B cell (primary cell): ENCODE measurements at regions of chr17 and their contacts with region 1.

Region 1: GRCh38 chr17:42388381-42389134 is at the start of gene STAT3:
- DNase-seq: peak; percentile 100
- ATAC-seq: peak; percentile 89
- H3K4me3 ChIP-seq: peak within 1 kb of the TSS; percentile 67 to 97 (median 91)
- H3K4me3 Mint-ChIP-seq: peak within 1 kb of the TSS; percentile 98
- H3K27ac ChIP-seq: peak within 1 kb of the TSS; percentile 97
- H3K27ac Mint-ChIP-seq: peak within 1 kb of the TSS; percentile 99
- H3K4me1 ChIP-seq: peaks cover 19 to 34% of the 10 kb centered on the region in 2 donors
- H3K4me1 Mint-ChIP-seq: peaks cover 51% of the 10 kb centered on the region
- H3K27me3 ChIP-seq: no peaks in the 10 kb centered on the region
- H3K27me3 Mint-ChIP-seq: no peaks in the 10 kb centered on the region
- CTCF ChIP-seq: no peak
- total RNA-seq, gene STAT3: 140 and 151 TPM in 2 replicates

Region 2: DNA sequence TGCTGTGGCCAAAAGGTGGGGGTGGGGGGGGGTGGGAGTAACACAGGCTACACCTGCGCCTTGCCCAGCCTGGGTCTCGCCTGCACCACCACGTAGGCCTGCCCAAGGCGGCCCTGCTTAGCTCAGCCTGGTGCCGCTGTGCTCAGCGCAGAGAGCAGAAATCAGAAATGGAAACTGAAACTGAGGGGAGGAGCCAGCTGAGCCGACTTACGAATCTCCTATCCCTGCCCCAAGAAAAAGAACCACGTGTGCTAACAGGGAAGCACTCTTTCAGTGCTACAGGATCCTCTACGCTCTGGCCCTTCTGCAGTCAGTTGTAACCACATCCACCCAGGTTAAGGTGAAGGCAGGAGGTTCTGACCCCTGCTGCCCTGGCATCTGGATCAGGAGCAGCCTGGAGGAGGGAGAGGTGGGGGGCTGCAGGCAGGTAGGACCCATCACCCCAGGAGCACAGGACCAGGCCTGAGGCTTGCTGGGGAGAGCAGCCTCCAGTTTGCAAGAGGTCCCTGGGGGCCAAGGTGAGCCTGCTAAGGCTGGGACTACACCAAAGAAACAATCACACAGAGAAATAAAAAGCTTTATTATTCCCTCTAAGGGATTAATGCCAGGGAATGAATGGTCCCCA is 275.9 kb before region 1 on chr17 and contains the start of gene DHX58:
- CTCF ChIA-PET with region 1: no interaction called
- POLR2A ChIA-PET with region 1: no interaction called
- intact Hi-C with region 1: loop called (anchors 10 kb)
- DNase-seq: peak; percentile 91
- ATAC-seq: peak; percentile 71
- H3K4me3 ChIP-seq: peak within 1 kb of the TSS; percentile 26 to 77 (median 53)
- H3K4me3 Mint-ChIP-seq: peak within 1 kb of the TSS; percentile 88
- H3K27ac ChIP-seq: peak within 1 kb of the TSS; percentile 85 to 88
- H3K27ac Mint-ChIP-seq: peak within 1 kb of the TSS; percentile 97
- H3K4me1 ChIP-seq: peaks cover 38 to 54% of the 10 kb centered on the region in 2 donors
- H3K4me1 Mint-ChIP-seq: peaks cover 57% of the 10 kb centered on the region
- H3K27me3 ChIP-seq: no peaks in the 10 kb centered on the region
- H3K27me3 Mint-ChIP-seq: no peaks in the 10 kb centered on the region
- CTCF ChIP-seq: no peak
- total RNA-seq, gene DHX58: 34.6 and 39.7 TPM in 2 replicates

Region 3: DNA sequence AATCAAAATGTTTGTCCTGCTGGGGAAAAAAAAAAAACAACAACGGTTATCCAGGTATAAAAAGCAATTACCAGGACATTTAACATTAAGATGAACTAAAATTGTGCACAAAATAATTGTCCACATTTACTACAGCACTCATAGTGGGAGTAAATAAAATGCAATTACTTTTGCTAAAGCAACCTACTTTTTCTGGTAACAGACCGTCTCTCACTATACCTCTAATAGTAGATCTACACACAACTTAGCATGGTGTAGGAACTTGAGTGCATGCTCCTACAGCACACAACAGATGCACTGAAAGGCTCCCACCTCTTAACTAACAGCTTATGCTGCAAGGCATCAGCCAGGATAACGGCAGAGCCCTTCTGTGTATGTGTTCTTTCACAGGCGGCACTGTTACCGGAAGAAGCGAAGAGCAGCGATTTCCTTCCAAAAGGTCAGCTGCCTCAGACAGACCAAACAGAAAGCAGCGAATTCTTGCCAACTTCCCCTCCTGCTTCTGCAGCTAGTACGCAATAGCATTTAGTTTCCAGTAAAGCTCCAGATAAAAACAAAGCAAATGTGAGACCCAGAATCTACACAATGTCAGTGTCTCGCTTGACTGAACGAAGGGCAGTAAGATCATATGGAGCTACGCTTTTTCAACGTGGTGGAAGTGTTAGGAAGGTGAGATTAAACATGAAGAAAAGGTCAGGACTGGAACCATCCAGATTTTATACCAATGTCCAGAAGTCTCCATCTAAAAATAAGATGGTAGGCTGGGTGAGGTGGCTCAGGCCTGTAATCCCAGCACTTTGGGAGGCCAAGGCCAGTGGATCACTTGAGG is 140.0 kb before region 1 on chr17:
- CTCF ChIA-PET with region 1: no interaction called
- POLR2A ChIA-PET with region 1: interaction called, 4 read pairs
- intact Hi-C with region 1: loop called (anchors 1 kb)
- DNase-seq: peak; percentile 87
- ATAC-seq: peak; percentile 97
- H3K4me3 ChIP-seq: peak overlapping the region; percentile 39 to 86 (median 61)
- H3K4me3 Mint-ChIP-seq: peak overlapping the region; percentile 88
- H3K27ac ChIP-seq: peak overlapping the region; percentile 84 to 93
- H3K27ac Mint-ChIP-seq: peak overlapping the region; percentile 95
- H3K4me1 ChIP-seq: peaks cover 20 to 24% of the 10 kb centered on the region in 2 donors
- H3K4me1 Mint-ChIP-seq: peaks cover 47% of the 10 kb centered on the region
- H3K27me3 ChIP-seq: no peaks in the 10 kb centered on the region
- H3K27me3 Mint-ChIP-seq: no peaks in the 10 kb centered on the region
- CTCF ChIP-seq: no peak

Region 4: GRCh38 chr17:42322382-42323267 is 65.9 kb before region 1 on chr17:
- CTCF ChIA-PET with region 1: interaction called, 22 read pairs
- POLR2A ChIA-PET with region 1: interaction called, 7 read pairs
- intact Hi-C with region 1: loop called (anchors 5 kb)
- DNase-seq: peak; percentile 94
- ATAC-seq: peak; percentile 98
- H3K4me3 ChIP-seq: no peak overlapping the region
- H3K4me3 Mint-ChIP-seq: no peak overlapping the region
- H3K27ac ChIP-seq: no peak overlapping the region
- H3K27ac Mint-ChIP-seq: peak overlapping the region; percentile 77
- H3K4me1 ChIP-seq: peaks cover 12 to 27% of the 10 kb centered on the region in 2 donors
- H3K4me1 Mint-ChIP-seq: peaks cover 26% of the 10 kb centered on the region
- H3K27me3 ChIP-seq: no peaks in the 10 kb centered on the region
- H3K27me3 Mint-ChIP-seq: no peaks in the 10 kb centered on the region
- CTCF ChIP-seq: peak; percentile 99

Region 5: DNA sequence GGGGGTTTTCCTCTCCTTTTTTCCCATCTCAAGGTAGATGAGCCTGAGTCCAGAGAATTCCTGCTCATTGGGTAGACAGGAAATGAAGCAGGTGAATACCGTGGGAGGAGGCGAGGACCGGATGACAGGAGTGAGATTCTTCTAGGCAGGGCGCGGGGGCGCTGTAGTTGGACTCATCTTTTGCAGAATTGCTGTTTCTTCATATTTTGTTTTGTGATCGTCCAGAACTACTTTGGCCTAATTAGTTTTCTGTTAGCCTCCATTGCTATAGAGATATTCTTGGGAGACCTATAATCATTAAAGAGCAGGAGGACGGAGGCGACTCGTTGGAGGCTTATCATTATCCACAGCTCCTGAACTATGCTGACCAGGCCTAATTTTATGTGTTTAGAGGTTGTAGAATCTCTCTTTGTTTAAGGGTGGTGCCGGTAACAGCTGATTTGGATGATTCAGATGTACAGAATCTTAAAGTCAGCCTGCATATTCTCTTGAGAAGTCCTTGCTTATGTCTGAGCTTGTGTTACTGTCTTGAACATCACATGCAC is 70.8 kb after region 1 on chr17:
- CTCF ChIA-PET with region 1: no interaction called
- POLR2A ChIA-PET with region 1: interaction called, 3 read pairs
- intact Hi-C with region 1: loop called (anchors 1 kb)
- DNase-seq: peak; percentile 44
- ATAC-seq: no peak
- H3K4me3 ChIP-seq: peak overlapping the region; percentile 67 to 97 (median 95)
- H3K4me3 Mint-ChIP-seq: peak overlapping the region; percentile 97
- H3K27ac ChIP-seq: peak overlapping the region; percentile 78 to 84
- H3K27ac Mint-ChIP-seq: peak overlapping the region; percentile 93
- H3K4me1 ChIP-seq: peaks cover 52 to 61% of the 10 kb centered on the region in 2 donors
- H3K4me1 Mint-ChIP-seq: peaks cover 59% of the 10 kb centered on the region
- H3K27me3 ChIP-seq: no peaks in the 10 kb centered on the region
- H3K27me3 Mint-ChIP-seq: no peaks in the 10 kb centered on the region
- CTCF ChIP-seq: peak; percentile 6

Region 6: DNA sequence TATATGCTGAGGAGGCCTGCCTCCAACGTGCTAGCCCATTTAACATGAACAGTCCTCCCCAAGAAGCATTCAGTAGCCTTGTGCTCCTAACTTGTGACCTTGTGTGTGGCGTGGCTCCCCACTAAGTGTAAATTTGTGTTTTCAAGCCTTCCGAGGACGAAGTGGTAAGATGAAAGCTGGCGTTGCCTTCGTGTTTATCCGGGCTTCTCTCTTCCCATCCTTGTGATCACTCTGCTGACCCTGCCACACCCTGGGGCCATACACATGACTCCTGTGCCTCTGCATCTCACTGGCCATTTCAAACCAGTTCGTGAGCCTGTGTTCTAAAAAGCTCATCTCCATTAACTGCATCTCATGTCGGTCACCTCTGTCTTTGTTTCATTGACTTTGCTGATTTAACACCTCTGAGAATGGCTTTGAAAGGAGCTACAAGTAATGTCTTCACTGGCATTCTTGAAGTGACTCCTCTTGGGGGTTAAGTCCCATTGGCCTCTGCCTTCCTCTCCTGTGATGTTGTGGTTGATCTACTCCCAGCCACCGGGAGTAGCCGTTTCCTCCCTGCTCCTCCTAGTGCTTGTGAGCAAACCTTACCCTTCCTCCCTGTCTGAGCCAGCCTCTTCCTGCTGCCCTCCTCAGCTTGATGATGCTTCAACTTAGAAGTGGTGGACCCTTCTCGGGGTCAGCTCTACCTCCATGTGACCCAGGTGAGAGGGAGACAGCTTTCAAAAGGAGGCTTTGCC is 120.0 kb after region 1 on chr17:
- CTCF ChIA-PET with region 1: no interaction called
- POLR2A ChIA-PET with region 1: no interaction called
- intact Hi-C with region 1: no loop called
- DNase-seq: no peak
- ATAC-seq: no peak
- H3K4me3 ChIP-seq: no peak overlapping the region
- H3K4me3 Mint-ChIP-seq: no peak overlapping the region
- H3K27ac ChIP-seq: no peak overlapping the region
- H3K27ac Mint-ChIP-seq: no peak overlapping the region
- H3K4me1 ChIP-seq: peaks cover 7 to 12% of the 10 kb centered on the region in 2 donors
- H3K4me1 Mint-ChIP-seq: peaks cover 14% of the 10 kb centered on the region
- H3K27me3 ChIP-seq: no peaks in the 10 kb centered on the region
- H3K27me3 Mint-ChIP-seq: no peaks in the 10 kb centered on the region
- CTCF ChIP-seq: no peak

Region 7: DNA sequence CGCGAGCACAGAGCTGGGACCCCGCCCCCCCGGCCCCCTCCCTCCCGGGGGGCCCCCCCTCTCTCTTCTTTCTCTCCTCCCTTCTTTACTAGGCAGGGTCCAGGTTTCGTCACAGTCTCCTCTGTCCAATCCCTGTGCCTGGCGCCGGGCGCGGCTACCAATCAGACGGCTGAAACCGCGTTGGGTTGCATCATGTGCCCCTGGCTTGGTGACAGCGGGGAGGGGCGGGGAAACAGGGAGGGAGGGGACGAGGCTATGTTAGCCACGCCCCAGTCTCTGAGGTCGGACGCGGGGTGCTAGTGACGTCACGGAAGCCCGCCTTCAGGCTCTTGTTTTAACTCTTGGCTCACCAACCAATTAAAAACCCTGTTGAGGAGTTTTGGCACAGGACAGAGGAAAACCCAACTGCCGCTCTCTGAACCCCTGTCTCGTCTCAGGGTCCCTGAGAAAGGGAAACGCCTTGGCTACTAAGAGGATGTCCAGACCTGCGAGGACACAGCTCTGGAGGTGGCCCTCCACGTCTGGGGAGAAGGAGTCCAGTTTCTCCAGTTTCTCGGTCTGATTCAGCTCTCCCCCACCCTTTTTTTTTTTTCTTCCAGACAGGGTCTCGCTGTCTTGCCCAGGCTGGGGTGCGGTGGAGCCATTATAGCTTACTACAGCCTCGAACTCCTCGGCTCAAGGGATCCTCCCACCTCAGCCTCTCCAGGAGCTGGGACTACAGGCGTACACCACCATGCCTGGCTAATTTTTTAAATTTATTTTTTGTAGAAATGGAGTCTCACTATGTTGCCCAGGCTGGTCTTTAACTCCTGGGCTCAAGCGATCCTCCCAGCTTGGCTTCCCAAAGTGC is 288.7 kb after region 1 on chr17:
- CTCF ChIA-PET with region 1: no interaction called
- POLR2A ChIA-PET with region 1: no interaction called
- intact Hi-C with region 1: loop called (anchors 2 kb)
- DNase-seq: peak; percentile 99
- ATAC-seq: peak; percentile 77
- H3K4me3 ChIP-seq: peak overlapping the region; percentile 53 to 75 (median 65)
- H3K4me3 Mint-ChIP-seq: peak overlapping the region; percentile 92
- H3K27ac ChIP-seq: no peak overlapping the region
- H3K27ac Mint-ChIP-seq: peak overlapping the region; percentile 86
- H3K4me1 ChIP-seq: peaks cover 72 to 80% of the 10 kb centered on the region in 2 donors
- H3K4me1 Mint-ChIP-seq: peaks cover 62% of the 10 kb centered on the region
- H3K27me3 ChIP-seq: peaks cover 0 to 67% (median 29%) of the 10 kb centered on the region in 4 experiments
- H3K27me3 Mint-ChIP-seq: peaks cover 14% of the 10 kb centered on the region
- CTCF ChIP-seq: no peak